ENCODE measurements at regions of chr15 and their contacts with region 1.

Region 1: DNA sequence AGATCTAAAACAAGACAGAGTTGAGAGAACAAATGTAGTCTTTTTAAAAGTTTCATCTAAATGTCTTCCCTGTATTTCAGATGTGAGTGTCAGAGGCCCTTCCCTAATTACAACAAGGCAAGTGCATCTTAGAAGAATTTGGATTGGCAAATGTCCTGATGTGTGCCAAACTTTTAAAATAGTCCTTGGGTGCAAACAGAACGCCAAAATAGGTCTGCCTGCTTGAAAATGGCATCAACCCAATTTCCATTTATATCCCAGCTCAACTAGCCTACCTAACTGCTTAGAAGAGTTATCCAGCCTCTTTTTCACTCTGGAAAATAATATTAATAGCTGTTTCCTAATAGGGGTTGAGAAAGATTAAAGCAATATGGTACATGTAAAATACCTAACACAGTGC is 311.8 kb upstream of the ARRDC4 start:
- DNase-seq: no peak
- ATAC-seq: peak in 1 of 4 donors; percentile 31
- H3K4me3 ChIP-seq: no peak overlapping the region
- H3K27ac ChIP-seq: peak overlapping the region in 1 of 12 donors; percentile 69
- H3K4me1 ChIP-seq: peaks cover 0 to 9% (median 0%) of the 10 kb centered on the region in 12 donors
- H3K27me3 ChIP-seq: peaks cover 0 to 11% (median 3%) of the 10 kb centered on the region in 9 donors
- CTCF ChIP-seq: no peak
- POLR2A ChIP-seq: no peak

Region 2: DNA sequence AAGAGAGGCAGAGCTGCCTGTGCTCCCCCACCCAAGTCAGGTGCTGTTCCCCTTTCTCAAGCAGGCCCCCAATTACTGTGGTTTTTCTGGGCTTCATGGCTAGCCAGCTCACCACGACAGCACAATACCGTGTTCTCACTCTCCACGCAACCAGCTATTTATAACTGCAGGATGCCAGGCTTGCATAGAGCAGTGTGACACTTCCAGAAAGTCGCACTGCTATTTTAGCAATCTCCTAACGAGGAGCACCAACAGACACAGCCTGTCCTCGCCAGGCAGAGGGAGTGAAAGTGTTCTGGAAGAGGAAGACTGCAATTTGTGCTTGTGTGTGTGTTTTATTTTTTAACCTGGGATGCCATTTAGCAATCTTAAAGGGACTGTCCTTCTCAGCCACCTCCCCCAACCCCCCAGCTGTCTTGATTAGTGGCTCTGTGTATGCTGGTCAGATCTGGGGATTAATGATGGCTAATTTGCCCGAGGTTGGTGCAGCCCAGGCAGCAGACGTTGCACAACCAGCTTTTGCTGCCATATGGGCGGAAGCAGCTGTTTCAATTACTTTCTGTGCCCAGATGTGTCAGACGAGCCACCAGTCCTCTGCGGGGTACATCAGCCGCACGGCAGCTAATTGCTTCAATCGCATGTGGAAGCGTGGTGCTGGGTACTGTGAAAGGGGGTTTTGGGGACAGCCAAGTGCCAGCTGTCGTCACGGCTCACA is 43.7 kb after region 1 on chr15:
- intact Hi-C with region 1: loop called in 1 of 10 experiments (anchors 5 kb)
- DNase-seq: peak in 4 of 5 donors; percentile 40 to 69 (median 42)
- ATAC-seq: peak; percentile 94 to 99 (median 98)
- H3K4me3 ChIP-seq: peak overlapping the region in 1 of 12 donors; percentile 6
- H3K27ac ChIP-seq: peak overlapping the region in 11 of 12 donors; percentile 15 to 86 (median 68)
- H3K4me1 ChIP-seq: peaks cover 0 to 18% (median 0%) of the 10 kb centered on the region in 12 donors
- H3K27me3 ChIP-seq: no peaks in the 10 kb centered on the region
- CTCF ChIP-seq: no peak
- POLR2A ChIP-seq: no peak